ENCODE measurements at regions of chr3 and their contacts with region 1.

Region 1: DNA sequence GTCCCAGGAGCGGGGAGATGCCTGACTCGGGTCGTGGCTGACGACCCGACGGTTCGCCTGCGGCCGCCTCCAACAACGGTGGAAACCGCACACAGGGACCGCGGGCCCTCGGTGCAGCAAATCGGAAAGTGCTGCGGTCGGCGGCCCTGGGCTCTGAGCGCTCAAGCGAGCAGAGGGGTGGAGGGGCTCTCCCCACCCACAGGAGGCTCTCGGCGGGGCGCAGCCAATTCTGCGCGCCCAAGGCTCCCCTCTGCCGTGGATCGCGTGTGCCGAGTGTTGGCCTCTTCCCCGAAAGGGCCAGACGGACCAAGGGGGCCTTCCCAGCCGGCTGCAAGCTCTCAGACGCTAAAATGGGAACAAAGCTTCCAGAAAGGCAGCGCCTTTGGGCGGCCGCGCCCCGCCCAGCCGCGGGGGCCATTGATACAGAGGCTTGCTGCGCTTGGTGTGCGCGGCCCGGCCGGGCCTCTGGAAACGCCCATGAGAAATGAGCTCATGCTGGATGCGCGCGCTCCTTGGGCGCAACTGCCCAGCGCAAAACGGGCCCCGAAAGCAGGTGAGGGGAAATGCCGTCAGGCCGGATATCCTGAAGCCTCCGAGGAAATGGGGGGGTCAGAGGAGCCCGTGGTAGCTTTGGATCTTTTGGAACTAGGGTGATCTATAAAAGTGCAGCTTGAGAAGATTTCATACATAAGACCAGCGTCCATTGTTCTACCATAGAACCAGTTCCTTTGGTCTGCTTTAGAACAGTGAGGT is 1.2 kb upstream of the GSK3B start:
- DNase-seq: peak; percentile 85 to 94 (median 87)
- H3K4me3 ChIP-seq: peak overlapping the region; percentile 37 to 83
- H3K4me3 Mint-ChIP-seq: peak overlapping the region in 1 of 8 donors; percentile 95
- H3K27ac ChIP-seq: peak overlapping the region; percentile 96
- H3K27ac Mint-ChIP-seq: peak overlapping the region in 1 of 7 donors; percentile 98
- H3K4me1 ChIP-seq: peaks cover 33% of the 10 kb centered on the region
- H3K4me1 Mint-ChIP-seq: peaks cover 12 to 42% (median 21%) of the 10 kb centered on the region in 4 donors
- H3K27me3 ChIP-seq: no peaks in the 10 kb centered on the region
- H3K27me3 Mint-ChIP-seq: peaks cover 0 to 2% of the 10 kb centered on the region in 2 donors

Region 2: GRCh38 chr3:119293871-119294695 is 801.3 kb before region 1 on chr3 and contains the start of gene ARHGAP31:
- CTCF ChIA-PET with region 1: no interaction called
- POLR2A ChIA-PET with region 1: no interaction called
- intact Hi-C with region 1: loop called (anchors 1 kb)
- DNase-seq: peak; percentile 92 to 95 (median 94)
- H3K4me3 ChIP-seq: peak within 1 kb of the TSS; percentile 79 to 85
- H3K4me3 Mint-ChIP-seq: peak within 1 kb of the TSS; percentile 92 to 97 (median 95)
- H3K27ac ChIP-seq: peak within 1 kb of the TSS; percentile 93
- H3K27ac Mint-ChIP-seq: peak within 1 kb of the TSS; percentile 97 to 99 (median 98)
- H3K4me1 ChIP-seq: peaks cover 55% of the 10 kb centered on the region
- H3K4me1 Mint-ChIP-seq: peaks cover 39 to 85% (median 55%) of the 10 kb centered on the region in 4 donors
- H3K27me3 ChIP-seq: no peaks in the 10 kb centered on the region
- H3K27me3 Mint-ChIP-seq: no peaks in the 10 kb centered on the region
- total RNA-seq, gene ARHGAP31: 4.5 to 5.8 TPM

Region 3: DNA sequence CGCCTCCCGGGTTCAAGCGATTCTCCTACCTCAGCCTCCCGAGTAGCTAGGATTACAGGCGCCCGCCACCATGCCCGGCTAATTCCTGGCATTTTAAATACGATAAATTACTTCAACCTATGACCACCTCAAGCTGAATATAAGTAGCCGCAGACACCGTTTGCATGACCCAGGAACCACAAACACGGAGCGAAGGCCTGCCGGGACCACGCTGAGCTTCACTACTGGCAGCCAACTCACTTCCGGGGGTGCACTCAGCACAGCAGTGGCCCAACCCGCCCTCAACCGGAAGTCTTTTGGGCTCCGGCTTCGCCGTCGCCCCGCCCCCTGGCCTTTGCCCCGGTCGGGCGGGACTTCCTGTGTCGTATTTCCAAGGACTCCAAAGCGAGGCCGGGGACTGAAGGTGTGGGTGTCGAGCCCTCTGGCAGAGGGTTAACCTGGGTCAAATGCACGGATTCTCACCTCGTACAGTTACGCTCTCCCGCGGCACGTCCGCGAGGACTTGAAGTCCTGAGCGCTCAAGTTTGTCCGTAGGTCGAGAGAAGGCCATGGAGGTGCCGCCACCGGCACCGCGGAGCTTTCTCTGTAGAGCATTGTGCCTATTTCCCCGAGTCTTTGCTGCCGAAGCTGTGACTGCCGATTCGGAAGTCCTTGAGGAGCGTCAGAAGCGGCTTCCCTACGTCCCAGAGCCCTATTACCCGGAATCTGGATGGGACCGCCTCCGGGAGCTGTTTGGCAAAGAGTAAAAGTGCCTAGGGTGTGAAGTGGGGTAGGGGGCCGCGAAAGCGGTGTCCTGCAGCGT is 597.0 kb before region 1 on chr3 and contains the start of gene TIMMDC1:
- CTCF ChIA-PET with region 1: no interaction called
- POLR2A ChIA-PET with region 1: interaction called, 14 read pairs
- intact Hi-C with region 1: loop called (anchors 1 kb)
- DNase-seq: peak; percentile 96 to 98 (median 97)
- H3K4me3 ChIP-seq: peak within 1 kb of the TSS; percentile 82 to 93
- H3K4me3 Mint-ChIP-seq: peak within 1 kb of the TSS; percentile 98 to 100 (median 99)
- H3K27ac ChIP-seq: peak within 1 kb of the TSS; percentile 92
- H3K27ac Mint-ChIP-seq: peak within 1 kb of the TSS; percentile 99 to 100 (median 100)
- H3K4me1 ChIP-seq: peaks cover 31% of the 10 kb centered on the region
- H3K4me1 Mint-ChIP-seq: peaks cover 13 to 42% (median 33%) of the 10 kb centered on the region in 4 donors
- H3K27me3 ChIP-seq: no peaks in the 10 kb centered on the region
- H3K27me3 Mint-ChIP-seq: no peaks in the 10 kb centered on the region
- total RNA-seq, gene TIMMDC1: 72.3 to 80.9 TPM

Region 4: DNA sequence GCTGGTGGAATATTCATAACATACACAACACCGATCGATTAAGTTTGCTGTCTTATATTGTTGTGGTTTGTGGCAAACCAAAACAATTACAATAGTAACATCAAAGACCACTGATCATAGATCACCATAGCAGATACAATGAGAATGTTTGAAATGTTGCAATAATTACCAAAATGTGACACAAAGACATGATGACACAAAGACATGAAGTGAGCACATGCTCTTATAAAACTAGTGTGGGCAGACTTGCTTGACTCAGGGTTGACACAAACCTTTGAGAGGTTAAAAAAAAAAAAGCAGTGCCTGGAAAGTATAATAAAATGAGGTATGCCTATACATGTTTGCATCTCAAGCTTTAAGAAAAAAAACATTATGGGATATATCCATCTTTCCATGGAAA is 183.2 kb before region 1 on chr3:
- CTCF ChIA-PET with region 1: no interaction called
- POLR2A ChIA-PET with region 1: interaction called, 3 read pairs
- intact Hi-C with region 1: loop called (anchors 5 kb)
- DNase-seq: no peak
- H3K4me3 ChIP-seq: no peak overlapping the region
- H3K4me3 Mint-ChIP-seq: peak overlapping the region in 6 of 8 donors; percentile 1 to 73 (median 44)
- H3K27ac ChIP-seq: no peak overlapping the region
- H3K27ac Mint-ChIP-seq: peak overlapping the region in 6 of 7 donors; percentile 13 to 80 (median 52)
- H3K4me1 ChIP-seq: peaks cover 16% of the 10 kb centered on the region
- H3K4me1 Mint-ChIP-seq: peaks cover 11 to 23% (median 19%) of the 10 kb centered on the region in 4 donors
- H3K27me3 ChIP-seq: no peaks in the 10 kb centered on the region
- H3K27me3 Mint-ChIP-seq: no peaks in the 10 kb centered on the region

Region 5: GRCh38 chr3:120177151-120177550 is 81.7 kb after region 1 on chr3:
- CTCF ChIA-PET with region 1: no interaction called
- POLR2A ChIA-PET with region 1: no interaction called
- intact Hi-C with region 1: no loop called
- DNase-seq: no peak
- H3K4me3 ChIP-seq: no peak overlapping the region
- H3K4me3 Mint-ChIP-seq: no peak overlapping the region
- H3K27ac ChIP-seq: no peak overlapping the region
- H3K27ac Mint-ChIP-seq: no peak overlapping the region
- H3K4me1 ChIP-seq: no peaks in the 10 kb centered on the region
- H3K4me1 Mint-ChIP-seq: no peaks in the 10 kb centered on the region
- H3K27me3 ChIP-seq: no peaks in the 10 kb centered on the region
- H3K27me3 Mint-ChIP-seq: peaks cover 0 to 4% of the 10 kb centered on the region in 2 donors

Region 6: GRCh38 chr3:120348981-120349818 is 253.8 kb after region 1 on chr3 and contains the start of gene LRRC58:
- CTCF ChIA-PET with region 1: interaction called, 3 read pairs
- POLR2A ChIA-PET with region 1: interaction called, 47 read pairs
- intact Hi-C with region 1: loop called (anchors 1 kb)
- DNase-seq: peak; percentile 86 to 93 (median 93)
- H3K4me3 ChIP-seq: peak within 1 kb of the TSS; percentile 67 to 91
- H3K4me3 Mint-ChIP-seq: peak within 1 kb of the TSS; percentile 88 to 95 (median 93)
- H3K27ac ChIP-seq: peak within 1 kb of the TSS; percentile 77
- H3K27ac Mint-ChIP-seq: peak within 1 kb of the TSS; percentile 87 to 96 (median 92)
- H3K4me1 ChIP-seq: peaks cover 46% of the 10 kb centered on the region
- H3K4me1 Mint-ChIP-seq: peaks cover 36 to 50% (median 43%) of the 10 kb centered on the region in 4 donors
- H3K27me3 ChIP-seq: no peaks in the 10 kb centered on the region
- H3K27me3 Mint-ChIP-seq: peaks cover 2% of the 10 kb centered on the region in 2 donors
- total RNA-seq, gene LRRC58: 23.0 to 23.6 TPM

Region 7: DNA sequence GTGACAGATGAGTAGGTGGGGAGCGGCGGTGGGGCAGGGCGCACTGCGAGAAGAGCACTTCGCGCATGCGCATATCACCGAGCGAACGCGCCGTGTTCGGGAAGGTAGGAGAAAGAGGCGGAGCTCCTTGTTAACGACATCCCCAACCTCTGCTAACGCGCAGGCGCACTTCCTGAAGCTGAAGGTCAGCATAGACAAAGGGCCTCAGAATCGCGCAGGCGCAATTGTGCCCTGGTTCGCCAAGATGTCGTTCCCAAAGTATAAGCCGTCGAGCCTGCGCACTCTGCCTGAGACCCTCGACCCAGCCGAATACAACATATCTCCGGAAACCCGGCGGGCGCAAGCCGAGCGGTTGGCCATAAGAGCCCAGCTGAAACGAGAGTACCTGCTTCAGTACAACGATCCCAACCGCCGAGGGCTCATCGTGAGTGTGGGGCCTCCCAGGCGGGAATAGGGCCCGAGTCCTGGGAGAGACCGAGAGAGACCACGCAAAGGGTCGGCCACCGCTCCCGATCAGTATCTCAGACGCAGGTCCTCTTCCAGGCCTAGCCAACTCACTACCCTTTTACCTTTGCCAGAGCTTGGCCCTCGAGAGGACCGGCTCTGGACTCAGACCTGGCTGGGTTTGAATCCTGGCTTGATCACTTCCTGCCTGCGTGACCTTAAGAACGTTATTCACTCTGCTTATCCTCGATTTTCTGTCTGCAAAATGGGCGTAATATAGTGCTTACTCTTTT is 500.9 kb after region 1 on chr3 and contains the start of gene NDUFB4:
- CTCF ChIA-PET with region 1: no interaction called
- POLR2A ChIA-PET with region 1: interaction called, 24 read pairs
- intact Hi-C with region 1: loop called (anchors 5 kb)
- DNase-seq: peak; percentile 89 to 96 (median 96)
- H3K4me3 ChIP-seq: peak within 1 kb of the TSS; percentile 97 to 99
- H3K4me3 Mint-ChIP-seq: peak within 1 kb of the TSS; percentile 91 to 98 (median 95)
- H3K27ac ChIP-seq: peak within 1 kb of the TSS; percentile 98
- H3K27ac Mint-ChIP-seq: peak within 1 kb of the TSS in 6 of 7 donors; percentile 96 to 99 (median 98)
- H3K4me1 ChIP-seq: peaks cover 30% of the 10 kb centered on the region
- H3K4me1 Mint-ChIP-seq: peaks cover 6 to 8% (median 7%) of the 10 kb centered on the region in 4 donors
- H3K27me3 ChIP-seq: no peaks in the 10 kb centered on the region
- H3K27me3 Mint-ChIP-seq: no peaks in the 10 kb centered on the region
- total RNA-seq, gene NDUFB4: 82.1 to 82.8 TPM

Region 8: GRCh38 chr3:120780977-120781376 is 685.6 kb after region 1 on chr3:
- CTCF ChIA-PET with region 1: no interaction called
- POLR2A ChIA-PET with region 1: no interaction called
- intact Hi-C with region 1: no loop called
- DNase-seq: no peak
- H3K4me3 ChIP-seq: no peak overlapping the region
- H3K4me3 Mint-ChIP-seq: no peak overlapping the region
- H3K27ac ChIP-seq: no peak overlapping the region
- H3K27ac Mint-ChIP-seq: peak overlapping the region in 1 of 7 donors; percentile 84
- H3K4me1 ChIP-seq: no peaks in the 10 kb centered on the region
- H3K4me1 Mint-ChIP-seq: peaks cover 0 to 2% (median 0%) of the 10 kb centered on the region in 4 donors
- H3K27me3 ChIP-seq: no peaks in the 10 kb centered on the region
- H3K27me3 Mint-ChIP-seq: no peaks in the 10 kb centered on the region

Region 9: DNA sequence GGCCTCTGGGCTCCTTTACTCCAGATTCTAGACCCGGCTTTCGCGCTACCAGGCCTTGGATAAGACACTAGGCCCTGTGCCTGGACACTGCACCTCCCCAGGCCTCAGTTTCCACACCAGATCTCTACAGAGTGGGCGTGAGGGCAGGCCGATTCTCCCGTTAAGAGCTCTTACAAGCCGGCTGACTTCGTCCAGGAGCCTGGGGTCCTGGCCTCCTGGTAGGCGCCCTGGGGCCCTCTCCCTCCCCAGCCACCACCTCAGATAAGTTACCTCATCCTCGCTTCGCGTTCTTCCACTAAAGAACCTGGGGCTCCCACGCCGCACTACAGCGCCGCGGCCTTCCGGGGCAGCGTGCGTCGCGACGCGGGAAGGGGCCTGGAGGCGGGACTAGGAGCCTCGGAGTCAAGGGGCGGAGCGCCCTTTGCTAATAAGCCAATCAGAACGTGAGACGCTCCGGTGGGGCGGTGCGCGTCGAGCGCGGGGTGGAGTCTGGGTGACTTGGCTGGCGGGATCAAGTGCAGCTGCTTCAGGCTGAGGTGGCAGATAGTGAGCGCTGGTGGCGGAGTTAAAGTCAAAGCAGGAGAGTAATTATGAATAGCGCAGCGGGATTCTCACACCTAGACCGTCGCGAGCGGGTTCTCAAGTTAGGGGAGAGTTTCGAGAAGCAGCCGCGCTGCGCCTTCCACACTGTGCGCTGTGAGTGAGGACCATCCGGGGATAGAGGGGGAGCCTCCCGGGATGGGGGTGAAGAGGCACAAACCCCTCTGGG is 1739.5 kb after region 1 on chr3 and contains the starts of genes EAF2 and IQCB1:
- CTCF ChIA-PET with region 1: no interaction called
- POLR2A ChIA-PET with region 1: no interaction called
- intact Hi-C with region 1: loop called (anchors 10 kb)
- DNase-seq: peak; percentile 97 to 98 (median 97)
- H3K4me3 ChIP-seq: peak within 1 kb of the TSS; percentile 83 to 96
- H3K4me3 Mint-ChIP-seq: peak within 1 kb of the TSS; percentile 92 to 98 (median 94)
- H3K27ac ChIP-seq: peak within 1 kb of the TSS; percentile 84
- H3K27ac Mint-ChIP-seq: peak within 1 kb of the TSS; percentile 77 to 98 (median 94)
- H3K4me1 ChIP-seq: peaks cover 30% of the 10 kb centered on the region
- H3K4me1 Mint-ChIP-seq: peaks cover 32 to 54% (median 44%) of the 10 kb centered on the region in 4 donors
- H3K27me3 ChIP-seq: no peaks in the 10 kb centered on the region
- H3K27me3 Mint-ChIP-seq: no peaks in the 10 kb centered on the region
- total RNA-seq, gene EAF2: 5.7 to 6.3 TPM
- total RNA-seq, gene IQCB1: 37.9 to 38.2 TPM

Measured in CD4-positive, alpha-beta memory T cell (primary cell).